ENCODE measurements at regions of chr10 and their contacts with region 1.

Region 1: DNA sequence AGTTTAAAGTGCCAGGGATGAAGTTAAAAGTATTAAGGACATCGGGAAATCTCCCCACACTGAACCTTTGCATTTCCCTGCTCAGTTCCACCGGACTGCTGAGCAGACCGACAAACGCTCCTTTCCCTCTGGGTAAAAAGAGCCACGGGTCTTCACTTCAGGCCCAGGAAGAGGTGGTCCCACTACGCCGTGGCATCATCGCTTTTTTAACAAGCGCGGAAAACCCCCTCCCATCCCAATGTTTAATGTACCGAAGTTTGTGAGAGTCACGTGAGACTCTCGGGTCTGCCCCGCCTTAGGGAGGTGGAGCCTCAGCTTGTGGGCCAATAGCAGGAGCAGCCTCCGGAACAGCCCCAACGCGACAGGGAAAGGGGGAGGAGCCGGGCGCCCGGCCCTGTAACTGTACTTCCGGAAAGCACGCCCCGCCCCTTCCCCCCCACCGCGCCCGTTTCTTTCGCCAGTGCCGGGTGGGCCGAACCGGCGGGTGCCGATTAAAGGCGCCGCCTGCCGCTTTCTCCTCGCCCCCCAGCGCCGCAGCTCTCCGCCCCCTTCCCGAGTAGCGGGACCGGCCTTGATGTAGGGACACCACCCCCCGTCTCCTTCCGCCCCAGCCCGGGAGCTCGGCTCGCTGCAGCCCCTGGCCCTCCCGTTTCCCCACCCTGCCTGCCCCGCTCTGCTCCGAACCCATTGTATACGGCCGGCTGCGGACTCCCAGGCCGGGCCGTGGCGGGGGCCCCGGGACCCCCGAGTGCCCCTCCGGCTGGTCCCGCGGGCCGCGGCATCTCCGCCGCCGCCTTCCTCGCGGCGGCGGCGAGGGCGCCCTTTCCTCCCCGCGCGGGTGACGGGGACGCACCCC is 2.2 kb upstream of the TRIM8 start:
- DNase-seq: peak; percentile 94
- ATAC-seq: peak; percentile 70
- H3K4me3 ChIP-seq: peak overlapping the region; percentile 69 to 85 (median 82)
- H3K27ac ChIP-seq: peak overlapping the region; percentile 95
- H3K4me1 ChIP-seq: peaks cover 16% of the 10 kb centered on the region
- H3K27me3 ChIP-seq: no peaks in the 10 kb centered on the region; a peak in 1 of 5 replicates
- CTCF ChIP-seq: peak; percentile 33; the same call in 1 of the 2 replicates
- EP300 ChIP-seq: peak in 1 of 2 experiments; percentile 56; a peak in 1 of 4 replicates
- POLR2A ChIP-seq: peak in 1 of 2 experiments; percentile 51; a peak in 2 of 4 replicates
- RAD21 ChIP-seq: 0 out of 2 replicates have a peak, but pooled peaks have one; percentile 18

Region 2: DNA sequence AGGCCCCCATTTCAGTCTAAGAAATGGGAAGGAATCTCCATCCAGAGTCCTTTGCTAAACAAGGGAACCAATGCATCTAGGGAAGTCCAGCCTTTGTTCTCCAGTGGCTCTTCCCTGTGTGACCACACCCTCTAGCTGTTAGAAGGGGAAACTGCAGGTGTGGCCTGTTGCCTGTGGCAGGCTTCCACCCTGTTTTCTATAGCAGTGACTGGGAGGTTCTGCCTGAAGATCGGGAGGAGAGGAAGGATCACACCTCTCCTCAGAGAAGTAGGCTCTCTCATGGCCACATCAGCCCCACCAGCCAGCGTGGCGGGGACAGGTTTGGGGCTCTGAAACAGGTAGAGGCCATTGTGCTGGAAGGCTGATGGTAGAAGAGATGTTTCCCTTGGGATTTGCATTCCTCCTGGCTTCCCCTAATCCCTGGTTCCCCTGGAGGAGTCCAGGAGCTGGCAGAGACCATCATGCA is 45.6 kb before region 1 on chr10:
- CTCF ChIA-PET with region 1: interaction called, 7 read pairs
- POLR2A ChIA-PET with region 1: interaction called, 68 read pairs
- in situ Hi-C with region 1: no loop called
- intact Hi-C with region 1: loop called (anchors 2 kb)
- DNase-seq: peak; percentile 70
- ATAC-seq: peak; percentile 60
- H3K4me3 ChIP-seq: peak overlapping the region in 1 of 3 experiments; percentile 47; a peak in 2 of 6 replicates
- H3K27ac ChIP-seq: peak overlapping the region; percentile 95
- H3K4me1 ChIP-seq: peaks cover 88% of the 10 kb centered on the region
- H3K27me3 ChIP-seq: no peaks in the 10 kb centered on the region
- CTCF ChIP-seq: peak; percentile 93
- EP300 ChIP-seq: no peak
- POLR2A ChIP-seq: no peak
- RAD21 ChIP-seq: peak; percentile 79

Region 3: DNA sequence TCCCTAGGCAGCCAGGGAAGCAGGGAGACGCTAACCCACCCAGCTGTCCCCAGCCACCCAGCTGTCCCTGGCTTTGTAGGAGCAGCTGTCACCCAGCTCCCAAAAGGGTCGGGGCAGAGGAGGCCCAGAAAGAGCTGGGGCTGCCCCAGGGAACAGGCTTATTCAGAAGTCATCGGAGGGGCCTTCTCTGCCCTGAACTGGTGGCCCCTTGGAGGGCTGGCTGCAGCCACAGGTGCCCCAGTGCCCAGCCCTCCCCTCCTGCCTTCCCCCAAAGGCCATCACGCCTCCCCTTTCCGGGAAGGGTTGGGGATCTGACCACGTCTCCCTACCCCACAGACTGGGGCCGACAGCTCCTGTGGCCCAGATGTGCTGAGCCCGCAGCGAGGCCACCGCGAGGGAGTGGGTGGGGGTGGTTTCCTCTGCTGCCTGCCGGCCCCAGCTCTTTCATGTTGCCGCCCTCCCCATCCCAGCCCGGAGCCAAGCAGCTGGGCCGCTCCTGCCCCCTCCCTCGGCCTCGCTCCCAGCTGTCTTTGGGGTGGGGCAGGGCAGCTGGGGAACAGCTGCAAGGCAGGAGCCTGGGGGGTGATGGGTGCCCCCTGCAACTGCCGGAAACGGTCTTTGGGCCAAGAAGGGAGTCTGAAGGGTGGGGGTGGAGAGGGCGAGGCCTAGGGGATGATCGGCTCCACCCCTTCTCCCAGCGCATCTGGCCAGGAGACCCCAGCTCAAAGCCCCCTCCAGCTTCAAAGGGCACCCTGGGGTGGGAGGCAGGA is 19.0 kb after region 1 on chr10:
- CTCF ChIA-PET with region 1: no interaction called
- POLR2A ChIA-PET with region 1: interaction called, 86 read pairs
- in situ Hi-C with region 1: no loop called
- intact Hi-C with region 1: no loop called
- DNase-seq: peak; percentile 72
- ATAC-seq: peak; percentile 79
- H3K4me3 ChIP-seq: peak overlapping the region; percentile 11 to 63 (median 45); a peak in 5 of 6 replicates
- H3K27ac ChIP-seq: no peak overlapping the region
- H3K4me1 ChIP-seq: peaks cover 77% of the 10 kb centered on the region
- H3K27me3 ChIP-seq: no peaks in the 10 kb centered on the region
- CTCF ChIP-seq: peak; percentile 10; the same call in 1 of the 2 replicates
- EP300 ChIP-seq: peak; percentile 22 to 47; a peak in 2 of 4 replicates
- POLR2A ChIP-seq: 0 out of 4 replicates have a peak, but pooled peaks of 1 of the 2 experiments have one; percentile 11
- RAD21 ChIP-seq: no peak; the same call in 1 of the 2 replicates

Region 4: DNA sequence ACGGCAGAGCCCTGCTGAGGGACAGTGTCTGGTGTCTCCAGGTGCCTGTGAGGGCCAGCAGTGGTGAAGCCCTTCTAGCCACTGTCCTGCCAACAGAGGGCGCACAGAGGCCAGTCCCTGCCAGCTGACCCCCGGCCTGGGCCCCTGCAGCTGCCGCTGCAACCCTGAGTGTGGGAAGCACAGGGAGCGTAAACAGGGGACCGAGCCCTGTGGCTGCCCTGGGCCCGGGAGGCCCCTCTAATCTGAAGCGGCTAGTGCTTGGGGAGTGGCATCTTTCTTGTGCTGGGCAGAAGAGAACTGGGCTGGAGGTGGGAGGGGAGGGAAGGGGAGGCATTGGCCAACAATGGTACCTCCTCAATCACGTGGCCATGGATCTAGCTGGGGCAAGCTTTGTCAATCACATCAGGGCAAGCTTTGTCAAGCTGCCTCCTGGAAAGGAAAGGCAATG is 36.8 kb after region 1 on chr10:
- CTCF ChIA-PET with region 1: no interaction called
- POLR2A ChIA-PET with region 1: interaction called, 16 read pairs
- in situ Hi-C with region 1: no loop called
- intact Hi-C with region 1: no loop called
- DNase-seq: peak; percentile 76
- ATAC-seq: peak; percentile 93
- H3K4me3 ChIP-seq: peak overlapping the region in 2 of 3 experiments; percentile 19 to 62; a peak in 3 of 6 replicates
- H3K27ac ChIP-seq: no peak overlapping the region
- H3K4me1 ChIP-seq: peaks cover 56% of the 10 kb centered on the region
- H3K27me3 ChIP-seq: no peaks in the 10 kb centered on the region
- CTCF ChIP-seq: peak; percentile 96
- EP300 ChIP-seq: no peak
- POLR2A ChIP-seq: no peak
- RAD21 ChIP-seq: peak; percentile 91

Measured in HepG2 (cell line).